ENCODE measurements at regions of chr11 and their contacts with region 1.

Region 1: DNA sequence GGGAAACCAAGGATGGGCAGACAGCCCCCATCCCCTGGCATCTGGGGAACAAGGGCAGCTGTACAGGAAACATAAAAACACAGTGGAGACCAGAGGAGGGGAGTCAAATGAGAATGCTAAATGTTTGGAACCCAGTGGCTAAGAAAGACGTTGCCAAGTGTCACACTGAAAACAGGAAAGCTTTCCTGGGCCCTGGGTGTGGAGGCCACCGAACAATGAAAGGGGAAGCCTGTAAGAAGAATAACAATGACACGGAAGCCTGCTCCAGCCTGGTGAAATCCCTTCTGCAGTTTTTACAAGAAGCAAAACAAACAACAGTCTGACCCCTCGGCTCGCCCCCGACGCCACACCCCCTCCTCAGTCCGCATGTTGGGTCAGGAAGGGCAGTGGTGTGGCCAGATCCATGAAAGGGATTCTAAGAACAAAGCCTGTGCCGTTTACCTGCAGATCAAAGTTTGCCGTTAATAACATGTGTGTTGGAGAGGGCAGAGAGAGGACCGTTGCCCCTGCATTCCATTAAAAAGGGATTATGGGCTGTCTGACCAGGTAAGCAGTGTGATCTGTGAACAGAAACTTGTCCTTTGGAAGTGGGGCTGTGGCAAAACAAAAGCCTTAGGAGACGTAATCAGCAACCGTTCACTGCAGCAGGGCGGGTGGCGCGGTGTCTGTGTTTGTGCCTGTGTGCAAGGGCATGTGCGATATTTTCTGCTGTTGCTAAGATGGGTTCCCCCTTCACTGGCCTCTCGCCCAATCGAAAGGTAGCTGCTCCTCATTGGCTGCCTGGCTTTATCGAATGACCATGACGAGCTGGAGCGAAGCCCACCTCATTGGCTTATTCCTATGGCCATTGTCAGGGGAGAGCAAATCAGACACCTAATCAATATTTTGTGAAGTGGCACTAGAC is 113.7 kb upstream of the BLID start:
- DNase-seq: peak; percentile 89
- H3K4me3 ChIP-seq: peak overlapping the region in 2 of 3 experiments; percentile 2 to 43
- H3K27ac ChIP-seq: peak overlapping the region; percentile 88
- H3K4me1 ChIP-seq: peaks cover 23% of the 10 kb centered on the region
- H3K27me3 ChIP-seq: no peaks in the 10 kb centered on the region
- CTCF ChIP-seq: no peak
- POLR2A ChIP-seq: peak; percentile 57

Region 2: GRCh38 chr11:121292495-121293287 is 937.0 kb before region 1 on chr11 and contains the start of gene SC5D:
- CTCF ChIA-PET with region 1: interaction called, 3 read pairs
- POLR2A ChIA-PET with region 1: no interaction called
- dilution Hi-C with region 1: no loop called
- intact Hi-C with region 1: loop called (anchors 5 kb)
- DNase-seq: peak; percentile 94
- H3K4me3 ChIP-seq: peak within 1 kb of the TSS; percentile 50 to 92 (median 86)
- H3K27ac ChIP-seq: peak within 1 kb of the TSS; percentile 58
- H3K4me1 ChIP-seq: peaks cover 15% of the 10 kb centered on the region
- H3K27me3 ChIP-seq: peaks cover 3% of the 10 kb centered on the region in 2 experiments
- CTCF ChIP-seq: no peak
- POLR2A ChIP-seq: peak; percentile 81
- total RNA-seq, gene SC5D: 40.0 and 40.2 TPM in 2 replicates

Region 3: GRCh38 chr11:121892131-121892681 is 337.5 kb before region 1 on chr11:
- CTCF ChIA-PET with region 1: no interaction called
- POLR2A ChIA-PET with region 1: no interaction called
- dilution Hi-C with region 1: no loop called
- intact Hi-C with region 1: loop called (anchors 1 kb)
- DNase-seq: peak; percentile 87
- H3K4me3 ChIP-seq: no peak overlapping the region
- H3K27ac ChIP-seq: no peak overlapping the region
- H3K4me1 ChIP-seq: peaks cover 12% of the 10 kb centered on the region
- H3K27me3 ChIP-seq: peaks cover 3 to 4% of the 10 kb centered on the region in 2 experiments
- CTCF ChIP-seq: no peak
- POLR2A ChIP-seq: no peak

Region 4: DNA sequence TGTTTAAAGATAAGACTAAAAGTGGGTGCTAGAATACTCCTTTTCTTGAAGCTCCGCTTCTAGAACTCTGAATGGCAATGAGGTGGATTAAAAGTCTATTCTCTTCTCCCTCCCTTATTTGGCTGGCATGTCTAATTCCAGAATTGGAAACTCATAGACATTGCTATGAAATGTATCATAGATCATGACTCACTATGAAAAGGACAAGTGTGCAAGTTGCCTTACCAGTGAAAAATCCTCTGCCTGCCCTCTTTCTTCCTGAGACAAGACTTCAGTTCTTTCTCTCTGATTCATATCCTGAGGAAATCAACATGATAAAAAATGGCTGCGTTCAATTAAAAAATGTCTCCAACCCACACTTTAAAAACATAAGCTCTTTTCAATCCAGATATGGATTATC is 40.5 kb before region 1 on chr11:
- CTCF ChIA-PET with region 1: no interaction called
- POLR2A ChIA-PET with region 1: no interaction called
- dilution Hi-C with region 1: no loop called
- intact Hi-C with region 1: loop called (anchors 1 kb)
- DNase-seq: peak; percentile 94
- H3K4me3 ChIP-seq: peak overlapping the region in 1 of 3 experiments; percentile 7
- H3K27ac ChIP-seq: peak overlapping the region; percentile 85
- H3K4me1 ChIP-seq: peaks cover 58% of the 10 kb centered on the region
- H3K27me3 ChIP-seq: no peaks in the 10 kb centered on the region
- CTCF ChIP-seq: no peak
- POLR2A ChIP-seq: peak; percentile 57

Region 5: GRCh38 chr11:122215244-122215992 is 14.3 kb before region 1 on chr11:
- CTCF ChIA-PET with region 1: interaction called, 12 read pairs
- POLR2A ChIA-PET with region 1: no interaction called
- dilution Hi-C with region 1: no loop called
- intact Hi-C with region 1: loop called (anchors 2 kb)
- DNase-seq: peak; percentile 79
- H3K4me3 ChIP-seq: no peak overlapping the region
- H3K27ac ChIP-seq: no peak overlapping the region
- H3K4me1 ChIP-seq: peaks cover 6% of the 10 kb centered on the region
- H3K27me3 ChIP-seq: peaks cover 0 to 3% of the 10 kb centered on the region in 2 experiments
- CTCF ChIP-seq: peak; percentile 96 to 98
- POLR2A ChIP-seq: no peak

Region 6: GRCh38 chr11:122439911-122440810 is 210.4 kb after region 1 on chr11:
- CTCF ChIA-PET with region 1: no interaction called
- POLR2A ChIA-PET with region 1: no interaction called
- dilution Hi-C with region 1: no loop called
- intact Hi-C with region 1: loop called (anchors 5 kb)
- DNase-seq: peak; percentile 10
- H3K4me3 ChIP-seq: peak overlapping the region in 2 of 3 experiments; percentile 27 to 28
- H3K27ac ChIP-seq: no peak overlapping the region
- H3K4me1 ChIP-seq: peaks cover 4% of the 10 kb centered on the region
- H3K27me3 ChIP-seq: peaks cover 12 to 27% of the 10 kb centered on the region in 2 experiments
- CTCF ChIP-seq: no peak
- POLR2A ChIP-seq: no peak

Region 7: GRCh38 chr11:122505304-122506006 is 275.7 kb after region 1 on chr11:
- CTCF ChIA-PET with region 1: interaction called, 11 read pairs
- POLR2A ChIA-PET with region 1: no interaction called
- dilution Hi-C with region 1: no loop called
- intact Hi-C with region 1: no loop called
- DNase-seq: peak; percentile 77
- H3K4me3 ChIP-seq: no peak overlapping the region
- H3K27ac ChIP-seq: no peak overlapping the region
- H3K4me1 ChIP-seq: no peaks in the 10 kb centered on the region
- H3K27me3 ChIP-seq: peaks cover 2 to 6% of the 10 kb centered on the region in 2 experiments
- CTCF ChIP-seq: peak; percentile 83 to 84
- POLR2A ChIP-seq: no peak

Measured in endothelial cell of umbilical vein (primary cell).